HCT116 (cell line): ENCODE measurements at regions of chr19 and their contacts with region 1.

Region 1: GRCh38 chr19:55407800-55408532 is 378 bp upstream of the UBE2S start:
- DNase-seq: peak; percentile 98
- ATAC-seq: peak; percentile 94
- H3K4me3 ChIP-seq: peak overlapping the region; percentile 81 to 93
- H3K27ac ChIP-seq: peak overlapping the region; percentile 95
- H3K4me1 ChIP-seq: peaks cover 12 to 27% of the 10 kb centered on the region in 2 experiments
- H3K27me3 ChIP-seq: no peaks in the 10 kb centered on the region
- CTCF ChIP-seq: no peak
- POLR2A ChIP-seq: no peak
- RAD21 ChIP-seq: no peak

Region 2: DNA sequence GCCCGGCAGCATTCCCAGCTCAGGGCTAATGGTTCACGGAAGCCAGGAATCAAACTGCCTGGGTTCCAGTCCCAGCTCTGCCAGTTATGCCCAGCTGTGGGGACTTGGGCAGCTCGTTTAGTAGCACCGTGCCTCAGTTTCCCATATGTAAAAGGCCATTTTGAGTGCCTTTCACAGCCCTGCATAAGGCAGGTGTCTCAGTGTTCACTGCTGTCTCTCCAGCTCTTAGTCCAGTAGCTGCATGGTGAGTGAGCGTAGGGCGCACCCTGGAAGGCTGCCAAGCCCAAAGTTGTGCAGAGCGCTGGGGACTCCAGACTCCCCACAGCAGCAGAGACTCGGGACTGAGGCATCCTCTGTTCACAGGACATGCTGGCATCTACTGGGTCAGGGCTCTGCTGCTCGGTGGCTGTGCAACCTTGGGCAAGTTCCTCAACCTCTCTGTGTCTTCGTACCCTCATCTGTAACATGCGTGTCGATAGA is 16.7 kb before region 1 on chr19:
- CTCF ChIA-PET with region 1: no interaction called
- POLR2A ChIA-PET with region 1: interaction called, 17 read pairs
- RAD21 ChIA-PET with region 1: no interaction called
- intact Hi-C with region 1: no loop called
- DNase-seq: no peak
- ATAC-seq: peak; percentile 11; the same call in 1 of the 2 replicates
- H3K4me3 ChIP-seq: no peak overlapping the region
- H3K27ac ChIP-seq: no peak overlapping the region; the same call in 1 of the 2 replicates
- H3K4me1 ChIP-seq: peaks cover 12 to 52% of the 10 kb centered on the region in 2 experiments
- H3K27me3 ChIP-seq: no peaks in the 10 kb centered on the region
- CTCF ChIP-seq: no peak
- POLR2A ChIP-seq: peak; percentile 23
- RAD21 ChIP-seq: no peak

Region 3: DNA sequence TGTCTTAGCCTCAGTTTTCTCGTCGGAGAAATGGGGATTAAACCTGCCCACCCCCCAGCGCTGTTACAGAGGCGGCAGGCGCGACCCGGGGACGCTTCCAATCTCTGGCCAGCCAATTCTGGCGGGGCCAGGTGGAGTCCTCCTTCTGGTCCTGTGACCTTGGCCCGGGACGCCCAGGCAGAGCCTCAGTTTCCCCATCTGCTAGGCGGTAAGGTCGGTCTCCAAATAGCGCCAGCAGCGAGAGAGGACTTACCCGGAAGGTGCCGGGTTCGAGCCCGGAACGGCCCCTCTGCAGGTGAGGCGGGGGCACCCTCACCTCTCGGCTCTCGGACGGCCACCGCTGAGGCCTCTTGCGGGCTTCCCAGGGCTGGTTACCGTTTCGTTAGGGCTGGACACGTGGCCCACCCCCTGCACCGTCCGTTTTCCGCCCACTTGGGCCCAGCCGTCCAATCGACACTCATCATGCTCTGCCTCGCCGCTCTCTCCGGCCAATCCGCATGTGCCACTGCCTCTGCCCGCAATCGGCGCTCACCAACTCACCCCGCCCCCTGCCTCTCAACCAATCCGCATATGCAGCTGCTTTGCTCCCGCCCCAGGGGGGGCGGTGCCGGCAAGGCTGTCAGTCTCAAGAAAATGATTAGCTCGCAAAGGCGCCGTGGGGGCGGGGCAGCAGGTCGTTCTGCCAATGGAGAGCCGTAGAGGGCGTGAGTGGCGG is 53.5 kb after region 1 on chr19 and contains the start of gene ISOC2:
- CTCF ChIA-PET with region 1: no interaction called
- POLR2A ChIA-PET with region 1: interaction called, 12 read pairs
- RAD21 ChIA-PET with region 1: no interaction called
- intact Hi-C with region 1: no loop called
- DNase-seq: peak; percentile 99
- ATAC-seq: peak; percentile 93
- H3K4me3 ChIP-seq: peak within 1 kb of the TSS; percentile 98 to 99
- H3K27ac ChIP-seq: peak within 1 kb of the TSS; percentile 87
- H3K4me1 ChIP-seq: peaks cover 9 to 28% of the 10 kb centered on the region in 2 experiments
- H3K27me3 ChIP-seq: no peaks in the 10 kb centered on the region
- CTCF ChIP-seq: no peak
- POLR2A ChIP-seq: no peak
- RAD21 ChIP-seq: no peak
- total RNA-seq, gene ISOC2: 56.8 TPM